MCF 10A (cell line): ENCODE measurements at regions of chr1 and their contacts with region 1.

Region 1: GRCh38 chr1:214957330-214958137 is 125.0 kb upstream of the KCNK2 start:
- DNase-seq: peak; percentile 98
- H3K4me3 Mint-ChIP-seq: peak overlapping the region; percentile 38
- H3K27ac Mint-ChIP-seq: peak overlapping the region; percentile 93
- H3K4me1 Mint-ChIP-seq: peaks cover 23% of the 10 kb centered on the region
- H3K27me3 Mint-ChIP-seq: no peaks in the 10 kb centered on the region
- CTCF ChIP-seq: no peak

Region 2: DNA sequence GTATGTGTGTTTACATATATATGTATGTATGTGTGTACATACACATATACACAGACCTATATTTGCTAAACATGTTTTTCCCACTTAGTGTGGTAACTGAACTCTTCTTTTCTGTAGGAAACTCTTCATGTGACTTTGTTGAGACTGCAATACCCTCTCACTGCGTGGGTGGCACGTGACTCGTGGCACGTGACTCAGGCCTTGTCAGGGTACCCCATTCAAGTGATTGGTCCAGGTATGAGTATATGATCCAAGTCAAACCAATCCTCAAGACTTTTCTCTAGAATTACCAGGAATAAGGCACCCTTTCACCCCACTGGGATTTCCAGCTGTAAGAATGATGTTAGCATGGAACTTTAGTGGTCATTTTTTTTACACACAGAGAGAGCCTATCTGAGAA is 24.2 kb before region 1 on chr1:
- CTCF ChIA-PET with region 1: interaction called, 4 read pairs
- POLR2A ChIA-PET with region 1: interaction called, 23 read pairs
- intact Hi-C with region 1: no loop called
- DNase-seq: no peak
- H3K4me3 Mint-ChIP-seq: no peak overlapping the region
- H3K27ac Mint-ChIP-seq: no peak overlapping the region
- H3K4me1 Mint-ChIP-seq: no peaks in the 10 kb centered on the region
- H3K27me3 Mint-ChIP-seq: no peaks in the 10 kb centered on the region
- CTCF ChIP-seq: no peak

Region 3: GRCh38 chr1:214983126-214983869 is 25.8 kb after region 1 on chr1:
- CTCF ChIA-PET with region 1: no interaction called
- POLR2A ChIA-PET with region 1: interaction called, 3 read pairs
- intact Hi-C with region 1: loop called (anchors 2 kb)
- DNase-seq: no peak
- H3K4me3 Mint-ChIP-seq: no peak overlapping the region
- H3K27ac Mint-ChIP-seq: no peak overlapping the region
- H3K4me1 Mint-ChIP-seq: peaks cover 16% of the 10 kb centered on the region
- H3K27me3 Mint-ChIP-seq: no peaks in the 10 kb centered on the region
- CTCF ChIP-seq: no peak